ENCODE measurements at regions of chr20 and their contacts with region 1.

Region 1: GRCh38 chr20:50165684-50166554 is 12.4 kb upstream of the PEDS1 start:
- DNase-seq: peak; percentile 74
- ATAC-seq: peak; percentile 97
- H3K4me3 ChIP-seq: peak overlapping the region in 4 of 5 experiments; percentile 24 to 56 (median 47)
- H3K4me3 Mint-ChIP-seq: peak overlapping the region; percentile 84
- H3K27ac ChIP-seq: no peak overlapping the region
- H3K27ac Mint-ChIP-seq: peak overlapping the region; percentile 70
- H3K4me1 ChIP-seq: peaks cover 9 to 10% of the 10 kb centered on the region in 2 donors
- H3K4me1 Mint-ChIP-seq: peaks cover 10% of the 10 kb centered on the region
- H3K27me3 ChIP-seq: peaks cover 0 to 6% (median 2%) of the 10 kb centered on the region in 4 experiments
- H3K27me3 Mint-ChIP-seq: peaks cover 12% of the 10 kb centered on the region
- CTCF ChIP-seq: no peak

Region 2: DNA sequence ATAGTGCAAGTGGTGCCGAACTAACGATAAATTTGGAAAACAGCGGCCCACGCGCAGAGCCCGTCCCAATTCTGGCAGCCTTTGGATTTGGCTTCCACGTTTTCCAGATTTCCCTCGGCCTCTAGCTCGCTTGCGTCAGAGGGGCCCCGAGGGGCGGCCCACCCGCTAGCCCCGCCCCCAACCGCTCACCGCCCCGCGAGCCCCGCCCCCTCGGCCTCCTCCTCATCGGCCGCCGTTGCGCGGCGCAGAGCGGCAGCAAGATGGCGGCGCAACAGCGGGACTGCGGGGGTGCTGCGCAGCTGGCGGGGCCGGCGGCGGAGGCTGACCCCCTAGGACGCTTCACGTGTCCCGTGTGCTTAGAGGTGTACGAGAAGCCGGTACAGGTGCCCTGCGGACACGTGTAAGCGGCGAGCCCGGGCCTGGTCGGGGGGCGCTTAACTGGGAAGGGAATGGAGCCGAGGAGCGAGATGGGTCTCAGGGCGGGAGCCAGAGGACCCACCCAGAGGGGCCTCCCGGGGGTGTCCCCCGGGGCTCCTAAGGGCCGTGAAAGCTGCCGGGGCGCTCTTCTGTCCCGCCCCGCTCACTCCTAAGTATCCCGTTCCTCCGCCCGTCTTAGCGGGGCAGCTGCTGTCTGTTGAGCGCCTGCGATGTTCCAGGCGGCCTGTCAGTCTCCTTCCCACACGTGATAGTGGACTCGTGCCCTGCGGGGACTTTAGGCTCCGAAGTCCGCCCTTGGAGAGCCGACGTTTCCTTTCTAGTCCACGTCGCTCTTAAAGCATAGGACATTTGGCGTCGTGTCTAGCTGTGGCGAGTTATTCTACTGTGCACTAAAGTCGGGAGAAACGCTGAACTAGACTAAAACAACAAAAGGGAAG is 229.5 kb before region 1 on chr20 and contains the start of gene RNF114:
- CTCF ChIA-PET with region 1: no interaction called
- POLR2A ChIA-PET with region 1: no interaction called
- intact Hi-C with region 1: loop called (anchors 5 kb)
- DNase-seq: peak; percentile 93
- ATAC-seq: peak; percentile 93
- H3K4me3 ChIP-seq: peak within 1 kb of the TSS; percentile 78 to 99 (median 94)
- H3K4me3 Mint-ChIP-seq: peak within 1 kb of the TSS; percentile 99
- H3K27ac ChIP-seq: peak within 1 kb of the TSS; percentile 89 to 90
- H3K27ac Mint-ChIP-seq: peak within 1 kb of the TSS; percentile 93
- H3K4me1 ChIP-seq: peaks cover 33 to 42% of the 10 kb centered on the region in 2 donors
- H3K4me1 Mint-ChIP-seq: peaks cover 49% of the 10 kb centered on the region
- H3K27me3 ChIP-seq: no peaks in the 10 kb centered on the region
- H3K27me3 Mint-ChIP-seq: no peaks in the 10 kb centered on the region
- CTCF ChIP-seq: no peak
- total RNA-seq, gene RNF114: 81.7 and 86.0 TPM in 2 replicates

Region 3: DNA sequence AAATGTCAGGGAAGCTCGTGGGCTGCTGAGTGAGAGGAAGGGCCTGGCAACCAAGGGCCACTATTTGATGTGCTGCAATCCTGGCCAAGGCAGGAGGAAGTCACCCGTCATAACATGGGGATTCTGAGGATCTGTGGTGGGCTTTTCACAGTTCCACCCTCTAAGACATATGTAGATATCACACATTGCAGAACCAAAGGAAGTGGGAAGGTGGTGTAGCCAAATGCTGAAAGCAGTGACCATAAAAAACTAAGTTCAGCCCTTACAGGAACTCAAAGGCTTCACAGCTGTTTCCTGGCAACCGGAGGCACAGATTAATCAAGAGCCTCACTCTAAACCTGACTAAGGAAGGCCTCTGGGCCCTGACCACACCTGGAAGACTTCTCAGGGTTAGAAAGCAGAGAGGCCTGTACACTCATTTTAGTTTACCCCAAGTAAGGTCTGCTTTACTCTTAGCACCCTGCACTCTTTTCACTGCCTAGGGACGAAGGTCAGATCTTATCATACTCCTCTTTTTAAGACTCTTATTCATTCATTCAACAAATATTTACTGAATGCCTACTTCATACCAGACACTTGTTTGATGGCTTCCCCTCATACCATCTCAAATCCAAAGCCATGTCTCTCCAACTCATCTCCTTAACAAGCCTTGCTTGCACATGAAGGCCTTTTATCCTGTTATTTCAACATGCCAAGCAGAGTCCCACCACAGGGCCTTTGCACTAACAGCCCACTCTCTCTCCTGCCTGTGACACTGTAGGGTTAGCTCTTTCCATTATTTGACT is 55.6 kb before region 1 on chr20:
- CTCF ChIA-PET with region 1: interaction called, 297 read pairs
- POLR2A ChIA-PET with region 1: no interaction called
- intact Hi-C with region 1: loop called (anchors 2 kb)
- DNase-seq: peak; percentile 61
- ATAC-seq: peak; percentile 10
- H3K4me3 ChIP-seq: peak overlapping the region in 2 of 5 experiments; percentile 3 to 41
- H3K4me3 Mint-ChIP-seq: peak overlapping the region; percentile 88
- H3K27ac ChIP-seq: peak overlapping the region; percentile 79 to 91
- H3K27ac Mint-ChIP-seq: peak overlapping the region; percentile 90
- H3K4me1 ChIP-seq: peaks cover 63 to 67% of the 10 kb centered on the region in 2 donors
- H3K4me1 Mint-ChIP-seq: peaks cover 81% of the 10 kb centered on the region
- H3K27me3 ChIP-seq: no peaks in the 10 kb centered on the region
- H3K27me3 Mint-ChIP-seq: no peaks in the 10 kb centered on the region
- CTCF ChIP-seq: no peak

Region 4: GRCh38 chr20:50146732-50147662 is 18.9 kb before region 1 on chr20:
- CTCF ChIA-PET with region 1: interaction called, 40 read pairs
- POLR2A ChIA-PET with region 1: no interaction called
- intact Hi-C with region 1: no loop called
- DNase-seq: peak; percentile 91
- ATAC-seq: peak; percentile 94
- H3K4me3 ChIP-seq: peak overlapping the region in 4 of 5 experiments; percentile 1 to 35 (median 18)
- H3K4me3 Mint-ChIP-seq: peak overlapping the region; percentile 74
- H3K27ac ChIP-seq: peak overlapping the region; percentile 90 to 95
- H3K27ac Mint-ChIP-seq: peak overlapping the region; percentile 97
- H3K4me1 ChIP-seq: peaks cover 25 to 27% of the 10 kb centered on the region in 2 donors
- H3K4me1 Mint-ChIP-seq: peaks cover 49% of the 10 kb centered on the region
- H3K27me3 ChIP-seq: no peaks in the 10 kb centered on the region
- H3K27me3 Mint-ChIP-seq: no peaks in the 10 kb centered on the region
- CTCF ChIP-seq: no peak

Region 5: DNA sequence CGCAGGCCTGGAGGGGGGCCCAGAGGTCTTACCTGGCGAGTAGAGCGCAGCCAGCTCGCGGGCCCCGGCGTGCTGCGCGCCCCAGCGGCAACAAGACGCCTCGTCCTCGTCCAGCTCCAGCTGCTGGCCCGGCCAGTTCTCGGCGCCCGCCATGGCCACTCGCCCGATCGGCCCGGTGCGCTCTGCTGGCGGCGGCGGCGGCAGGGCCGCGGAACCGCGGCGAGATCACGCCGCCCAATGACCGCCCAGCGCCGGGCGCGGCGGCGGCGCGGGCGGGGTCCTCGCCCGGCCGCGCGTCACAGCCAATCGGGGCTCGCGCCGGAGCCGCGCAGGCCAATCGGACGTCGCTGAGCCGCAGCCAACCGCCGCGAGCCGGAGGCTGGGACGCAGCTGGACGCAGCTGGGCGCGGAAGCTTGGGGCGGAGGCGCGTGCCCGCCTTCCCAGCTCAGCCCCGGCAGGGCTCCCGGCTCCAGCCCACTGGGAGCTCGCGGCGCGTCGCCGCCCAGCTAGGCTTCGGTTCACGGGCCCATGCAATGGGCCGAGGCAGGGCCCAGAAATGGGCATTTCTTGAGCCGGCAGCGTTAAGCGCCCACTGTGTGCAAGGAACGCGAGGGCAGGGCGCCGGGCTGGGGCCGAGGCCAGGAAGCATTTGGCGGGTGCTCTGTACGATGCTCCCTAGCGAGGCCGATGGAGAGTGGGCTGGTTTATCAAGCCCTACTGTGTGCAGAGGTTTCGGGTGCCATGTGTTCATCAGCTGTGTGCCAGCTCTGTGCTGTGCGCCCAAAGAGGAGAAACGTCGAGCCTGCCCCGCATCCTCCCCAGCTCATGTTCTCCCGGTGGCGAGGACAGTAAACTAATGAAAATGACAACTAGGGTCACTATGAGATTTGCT is 12.2 kb before region 1 on chr20 and contains the start of gene PEDS1:
- CTCF ChIA-PET with region 1: interaction called, 40 read pairs
- POLR2A ChIA-PET with region 1: interaction called, 10 read pairs
- intact Hi-C with region 1: loop called (anchors 1 kb)
- DNase-seq: peak; percentile 89
- ATAC-seq: peak; percentile 98
- H3K4me3 ChIP-seq: peak within 1 kb of the TSS; percentile 71 to 96 (median 87)
- H3K4me3 Mint-ChIP-seq: peak within 1 kb of the TSS; percentile 77
- H3K27ac ChIP-seq: peak within 1 kb of the TSS; percentile 63 to 85
- H3K27ac Mint-ChIP-seq: peak within 1 kb of the TSS; percentile 86
- H3K4me1 ChIP-seq: peaks cover 18 to 24% of the 10 kb centered on the region in 2 donors
- H3K4me1 Mint-ChIP-seq: peaks cover 38% of the 10 kb centered on the region
- H3K27me3 ChIP-seq: no peaks in the 10 kb centered on the region
- H3K27me3 Mint-ChIP-seq: no peaks in the 10 kb centered on the region
- CTCF ChIP-seq: no peak
- total RNA-seq, gene PEDS1: 11.2 and 13.9 TPM in 2 replicates

Region 6: DNA sequence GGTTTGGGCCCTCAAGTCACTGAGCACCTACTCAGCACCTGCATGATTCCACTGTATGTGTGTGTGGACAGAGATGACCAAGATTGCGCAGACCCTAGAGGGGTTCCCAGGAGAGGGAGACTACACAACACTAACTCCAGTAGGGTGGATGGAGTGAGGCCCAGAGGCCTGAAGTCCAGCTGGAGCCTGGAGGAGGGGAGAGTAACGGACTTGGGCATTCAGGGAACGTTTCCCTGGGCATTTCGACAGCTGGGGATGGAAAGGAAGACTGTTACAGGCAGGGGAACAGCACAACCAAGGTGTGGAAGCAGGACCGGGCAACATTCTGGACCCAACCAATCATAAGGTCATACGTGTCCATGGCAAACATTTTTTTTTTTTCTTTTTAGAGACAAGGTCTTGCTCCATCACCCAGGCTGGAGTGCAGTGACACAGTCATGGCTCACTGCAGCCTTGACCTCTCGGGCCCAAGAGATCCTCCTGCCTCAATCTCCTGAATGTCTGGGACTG is 13.6 kb after region 1 on chr20:
- CTCF ChIA-PET with region 1: interaction called, 45 read pairs
- POLR2A ChIA-PET with region 1: interaction called, 5 read pairs
- intact Hi-C with region 1: no loop called
- DNase-seq: no peak
- ATAC-seq: peak; percentile 25
- H3K4me3 ChIP-seq: no peak overlapping the region
- H3K4me3 Mint-ChIP-seq: no peak overlapping the region
- H3K27ac ChIP-seq: no peak overlapping the region
- H3K27ac Mint-ChIP-seq: no peak overlapping the region
- H3K4me1 ChIP-seq: no peaks in the 10 kb centered on the region
- H3K4me1 Mint-ChIP-seq: no peaks in the 10 kb centered on the region
- H3K27me3 ChIP-seq: peaks cover 0 to under 1% (median 0%) of the 10 kb centered on the region in 4 experiments
- H3K27me3 Mint-ChIP-seq: peaks cover 9% of the 10 kb centered on the region
- CTCF ChIP-seq: peak; percentile 55